Naive thymus-derived CD4-positive, alpha-beta T cell (primary cell): ENCODE measurements at regions of chr17 and their contacts with region 1.

Region 1: GRCh38 chr17:50865984-50866774 is at the start of gene TOB1:
- DNase-seq: peak; percentile 92 to 98 (median 95)
- ATAC-seq: peak; percentile 86
- H3K4me3 ChIP-seq: peak within 1 kb of the TSS; percentile 89
- H3K4me3 Mint-ChIP-seq: peak within 1 kb of the TSS; percentile 96 to 100 (median 100)
- H3K27ac ChIP-seq: peak within 1 kb of the TSS; percentile 98
- H3K27ac Mint-ChIP-seq: peak within 1 kb of the TSS; percentile 98 to 100 (median 100)
- H3K4me1 ChIP-seq: peaks cover 41 to 50% of the 10 kb centered on the region in 2 donors
- H3K4me1 Mint-ChIP-seq: peaks cover 31 to 65% (median 57%) of the 10 kb centered on the region in 7 donors
- H3K27me3 ChIP-seq: no peaks in the 10 kb centered on the region
- H3K27me3 Mint-ChIP-seq: peaks cover 0 to 2% (median 0%) of the 10 kb centered on the region in 5 donors
- total RNA-seq, gene TOB1: 51.5 to 261 (median 131) TPM

Region 2: DNA sequence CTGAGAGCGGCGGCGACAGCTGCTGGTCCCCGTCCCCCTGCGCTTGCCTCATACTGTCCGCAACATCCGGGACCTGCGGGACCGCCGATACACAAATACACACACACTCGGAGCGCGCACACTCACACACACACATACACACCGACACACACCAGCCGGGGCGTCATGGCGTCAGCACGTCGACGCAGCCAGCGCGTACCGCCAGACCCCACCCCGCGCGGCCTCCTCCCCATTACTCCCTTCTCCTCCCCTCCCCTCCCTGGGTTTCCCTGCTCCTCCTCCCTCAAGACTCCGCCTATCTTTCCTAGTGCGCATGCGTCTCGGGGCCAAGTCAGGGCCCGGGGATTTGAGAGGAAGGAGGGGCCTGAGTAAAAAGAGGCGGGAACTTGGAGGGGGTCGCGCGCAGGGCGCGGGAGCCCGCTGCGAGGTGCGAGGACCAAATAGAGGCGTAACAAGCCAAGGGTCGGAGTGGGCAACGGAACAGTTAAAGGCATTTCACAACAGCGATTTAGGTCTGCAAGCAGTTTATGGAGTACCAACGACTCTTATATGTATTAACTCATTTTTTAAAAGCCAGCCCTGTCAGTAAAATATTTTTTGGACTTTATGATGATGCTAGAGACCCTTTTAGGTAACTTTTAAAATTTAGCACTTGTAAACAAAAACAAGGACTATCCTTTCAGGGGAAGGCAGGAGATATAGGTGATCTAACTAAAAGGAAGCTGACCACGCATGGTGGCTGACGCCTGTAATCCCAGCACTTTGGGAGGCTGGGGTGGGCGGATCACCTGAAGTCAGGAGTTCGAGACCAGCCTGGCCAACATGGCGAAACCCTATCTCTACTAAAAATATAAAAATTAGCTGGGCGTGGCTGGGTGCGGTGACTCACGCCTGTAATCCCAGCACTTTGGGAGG is 1188.0 kb before region 1 on chr17 and contains the start of gene SPOP:
- CTCF ChIA-PET with region 1: no interaction called
- POLR2A ChIA-PET with region 1: no interaction called
- intact Hi-C with region 1: loop called in 1 of 2 experiments (anchors 5 kb)
- DNase-seq: peak; percentile 94 to 100 (median 99)
- ATAC-seq: peak; percentile 98
- H3K4me3 ChIP-seq: peak within 1 kb of the TSS; percentile 88
- H3K4me3 Mint-ChIP-seq: peak within 1 kb of the TSS; percentile 88 to 98 (median 94)
- H3K27ac ChIP-seq: peak within 1 kb of the TSS; percentile 87
- H3K27ac Mint-ChIP-seq: peak within 1 kb of the TSS; percentile 94 to 100 (median 98)
- H3K4me1 ChIP-seq: peaks cover 25 to 26% of the 10 kb centered on the region in 2 donors
- H3K4me1 Mint-ChIP-seq: peaks cover 36 to 65% (median 47%) of the 10 kb centered on the region in 7 donors
- H3K27me3 ChIP-seq: no peaks in the 10 kb centered on the region
- H3K27me3 Mint-ChIP-seq: peaks cover 0 to 13% (median 0%) of the 10 kb centered on the region in 5 donors
- total RNA-seq, gene SPOP: 59.6 to 94.8 (median 80.9) TPM

Region 3: DNA sequence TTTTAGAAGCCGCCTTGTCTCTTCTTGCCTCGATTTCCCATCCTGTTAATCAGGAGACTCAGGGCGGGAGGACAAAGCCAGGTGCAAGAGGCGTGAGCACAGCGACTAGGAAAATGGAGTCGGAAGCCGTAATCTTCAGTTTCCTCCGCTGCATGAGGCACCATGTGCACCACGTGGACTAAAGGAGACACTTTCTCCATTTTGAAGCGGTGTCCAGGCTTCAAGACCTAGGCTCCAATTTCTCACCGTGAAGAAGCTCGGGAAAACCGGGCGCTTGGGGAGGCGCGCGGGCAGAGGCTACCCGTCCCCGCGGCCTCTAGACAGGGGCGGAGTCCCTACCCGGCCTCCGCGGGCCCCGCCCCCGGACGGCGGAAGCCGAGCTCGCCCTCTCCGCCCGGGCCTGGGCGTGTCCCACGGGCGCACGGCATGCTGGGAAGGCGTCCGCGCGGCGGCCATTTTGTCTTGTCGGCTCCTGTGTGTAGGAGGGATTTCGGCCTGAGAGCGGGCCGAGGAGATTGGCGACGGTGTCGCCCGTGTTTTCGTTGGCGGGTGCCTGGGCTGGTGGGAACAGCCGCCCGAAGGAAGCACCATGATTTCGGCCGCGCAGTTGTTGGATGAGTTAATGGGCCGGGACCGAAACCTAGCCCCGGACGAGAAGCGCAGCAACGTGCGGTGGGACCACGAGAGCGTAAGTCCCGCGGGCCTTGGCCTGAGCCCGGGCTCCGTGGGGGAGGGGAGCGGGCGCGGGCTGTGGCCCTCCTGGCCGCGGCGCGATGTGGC is 146.8 kb before region 1 on chr17 and contains the start of gene LUC7L3:
- CTCF ChIA-PET with region 1: no interaction called
- POLR2A ChIA-PET with region 1: interaction called, 9 read pairs
- intact Hi-C with region 1: loop called in 1 of 2 experiments (anchors 1 kb)
- DNase-seq: peak; percentile 88 to 97 (median 95)
- ATAC-seq: peak; percentile 98
- H3K4me3 ChIP-seq: peak within 1 kb of the TSS; percentile 92
- H3K4me3 Mint-ChIP-seq: peak within 1 kb of the TSS; percentile 84 to 99 (median 98)
- H3K27ac ChIP-seq: peak within 1 kb of the TSS; percentile 95
- H3K27ac Mint-ChIP-seq: peak within 1 kb of the TSS; percentile 93 to 100 (median 99)
- H3K4me1 ChIP-seq: peaks cover 22 to 26% of the 10 kb centered on the region in 2 donors
- H3K4me1 Mint-ChIP-seq: peaks cover 19 to 37% (median 27%) of the 10 kb centered on the region in 7 donors
- H3K27me3 ChIP-seq: no peaks in the 10 kb centered on the region
- H3K27me3 Mint-ChIP-seq: no peaks in the 10 kb centered on the region
- total RNA-seq, gene LUC7L3: 131 to 331 (median 149) TPM

Region 4: DNA sequence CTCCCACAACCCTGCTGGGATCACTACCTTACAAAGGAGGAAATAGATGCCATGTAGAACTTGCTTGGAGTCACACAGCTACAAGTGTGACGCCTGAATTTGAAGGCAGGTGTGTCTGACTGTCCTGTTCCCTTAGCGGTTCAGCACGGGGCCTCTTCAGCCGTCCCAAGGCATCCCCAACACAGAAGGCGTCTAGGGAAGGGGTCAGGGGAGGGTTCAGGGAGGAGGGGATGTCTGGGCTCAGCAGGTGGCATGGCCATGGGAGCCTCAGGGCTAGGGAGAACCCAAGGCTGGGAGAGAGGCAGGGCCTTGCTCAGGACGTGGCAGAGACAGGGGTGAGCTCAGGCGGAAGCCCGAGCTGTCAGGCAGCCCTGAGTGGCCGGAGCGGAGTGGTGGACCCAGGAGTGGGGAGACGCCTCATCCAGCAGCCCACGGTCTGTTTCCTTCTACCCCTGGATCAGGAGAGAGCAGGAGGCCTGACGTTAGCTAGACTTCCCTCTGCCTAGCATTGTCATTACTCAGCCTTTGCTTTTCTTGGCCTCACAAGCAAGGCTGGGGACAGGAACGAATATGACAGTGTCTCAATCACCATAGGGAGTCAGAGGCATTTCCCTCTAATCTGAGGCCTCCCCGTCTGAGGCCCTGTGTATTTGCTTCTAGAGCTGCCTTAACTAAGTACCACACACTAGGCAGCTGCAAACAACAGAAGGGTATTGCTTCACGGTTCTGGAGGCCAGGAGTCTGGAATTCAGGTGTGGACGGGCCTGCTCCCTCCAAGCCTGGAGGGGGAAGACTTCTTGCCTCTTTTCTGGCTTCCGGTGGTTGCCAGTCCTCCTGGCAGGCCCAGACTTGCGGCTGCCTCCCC is 67.5 kb before region 1 on chr17:
- CTCF ChIA-PET with region 1: no interaction called
- POLR2A ChIA-PET with region 1: no interaction called
- intact Hi-C with region 1: no loop called
- DNase-seq: no peak
- ATAC-seq: no peak
- H3K4me3 ChIP-seq: no peak overlapping the region
- H3K4me3 Mint-ChIP-seq: no peak overlapping the region
- H3K27ac ChIP-seq: no peak overlapping the region
- H3K27ac Mint-ChIP-seq: no peak overlapping the region
- H3K4me1 ChIP-seq: no peaks in the 10 kb centered on the region
- H3K4me1 Mint-ChIP-seq: no peaks in the 10 kb centered on the region
- H3K27me3 ChIP-seq: no peaks in the 10 kb centered on the region
- H3K27me3 Mint-ChIP-seq: peaks cover 0 to 2% (median 0%) of the 10 kb centered on the region in 5 donors

Region 5: DNA sequence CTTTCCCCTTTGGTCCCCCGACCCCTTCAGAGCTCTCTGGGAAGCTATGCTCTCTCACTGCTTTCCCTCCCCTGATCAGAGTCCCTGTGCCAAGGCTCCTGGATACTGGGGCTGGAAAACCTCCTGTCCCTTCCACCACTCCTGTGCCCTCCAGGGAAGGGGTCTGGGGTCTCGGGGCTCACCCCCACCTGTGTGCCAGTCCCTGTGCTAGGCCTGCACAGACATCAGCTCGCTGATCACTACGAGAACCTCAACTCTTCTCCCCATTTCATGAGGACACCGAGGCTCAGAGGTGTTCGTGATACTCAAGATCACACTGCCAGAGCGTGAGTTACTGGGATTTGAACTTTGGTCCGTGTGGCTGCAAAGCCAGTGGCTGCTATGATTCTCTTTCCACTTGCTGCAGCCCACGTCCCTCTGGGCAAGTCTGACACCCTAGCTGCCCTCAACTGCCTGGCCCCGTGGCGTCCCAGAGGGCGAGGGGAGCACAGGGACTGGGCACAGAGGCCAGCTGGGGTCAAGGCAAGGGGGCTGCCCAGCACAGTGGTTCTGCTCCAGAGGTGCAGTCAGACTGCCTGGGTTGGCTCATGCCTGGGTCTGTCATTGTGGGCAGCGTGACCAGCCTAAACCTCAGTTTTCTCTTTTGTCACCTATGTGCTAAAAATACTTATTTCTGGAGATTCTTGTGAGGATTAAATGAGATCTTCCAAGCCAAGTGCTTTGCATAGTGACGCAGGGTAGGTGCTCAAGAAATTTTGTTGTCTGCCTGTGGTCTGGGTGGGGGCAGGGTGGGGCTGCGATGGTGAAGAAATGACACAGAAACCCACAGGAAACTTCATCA is 43.8 kb after region 1 on chr17:
- CTCF ChIA-PET with region 1: interaction called, 10 read pairs
- POLR2A ChIA-PET with region 1: interaction called, 828 read pairs
- intact Hi-C with region 1: loop called (anchors 1 kb)
- DNase-seq: peak in 7 of 9 donors; percentile 67 to 87 (median 81)
- ATAC-seq: peak; percentile 92
- H3K4me3 ChIP-seq: peak overlapping the region; percentile 46
- H3K4me3 Mint-ChIP-seq: peak overlapping the region; percentile 29 to 84 (median 66)
- H3K27ac ChIP-seq: peak overlapping the region; percentile 75
- H3K27ac Mint-ChIP-seq: peak overlapping the region; percentile 87 to 99 (median 98)
- H3K4me1 ChIP-seq: peaks cover 50 to 69% of the 10 kb centered on the region in 2 donors
- H3K4me1 Mint-ChIP-seq: peaks cover 41 to 78% (median 67%) of the 10 kb centered on the region in 7 donors
- H3K27me3 ChIP-seq: no peaks in the 10 kb centered on the region
- H3K27me3 Mint-ChIP-seq: peaks cover 0 to 2% (median 0%) of the 10 kb centered on the region in 5 donors

Region 6: DNA sequence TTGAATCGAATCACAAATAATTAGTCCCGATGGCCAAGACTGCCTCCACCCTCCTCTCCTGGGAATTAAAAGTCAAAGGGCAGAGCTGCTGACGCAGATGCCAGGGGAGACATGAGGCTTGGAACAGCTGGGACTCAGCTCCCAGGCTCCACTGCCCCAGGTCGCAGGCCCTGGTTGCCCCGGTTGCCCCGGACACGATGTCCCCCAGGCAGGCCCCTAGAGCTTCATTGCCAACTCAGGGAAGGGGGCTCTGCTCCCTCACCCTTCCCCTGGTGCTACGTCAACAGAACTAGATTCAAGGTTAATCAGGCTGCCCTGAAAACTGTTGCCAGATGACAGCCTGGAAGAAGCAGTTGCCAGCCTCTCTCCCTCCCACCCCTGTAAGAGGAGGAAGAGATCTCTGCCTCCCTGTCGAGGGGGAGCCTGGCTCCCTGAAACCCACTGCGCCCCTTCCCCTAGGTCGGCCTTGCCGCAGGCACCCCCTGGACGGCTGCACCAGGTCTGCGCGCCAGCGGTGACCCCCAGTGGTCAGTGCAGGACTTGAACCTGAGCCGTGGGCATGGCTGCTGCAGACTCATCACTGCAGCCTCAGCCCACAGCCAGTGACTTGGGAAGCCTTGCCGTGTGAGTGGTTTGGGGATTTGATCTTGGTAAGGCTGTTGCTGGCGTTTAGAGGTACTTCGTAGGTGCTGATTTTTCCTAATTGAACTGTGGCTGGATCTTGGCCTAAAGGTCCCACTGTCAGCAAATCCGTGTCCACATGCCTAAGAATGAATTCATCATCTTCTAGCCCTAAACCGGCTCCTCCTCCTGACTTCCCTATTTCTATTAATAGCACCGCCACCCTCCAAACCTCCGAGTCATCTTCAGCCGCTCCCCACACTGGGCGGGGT is 84.1 kb after region 1 on chr17:
- CTCF ChIA-PET with region 1: interaction called, 33 read pairs
- POLR2A ChIA-PET with region 1: interaction called, 664 read pairs
- intact Hi-C with region 1: loop called (anchors 1 to 5 kb)
- DNase-seq: peak; percentile 34 to 71 (median 51)
- ATAC-seq: peak; percentile 88
- H3K4me3 ChIP-seq: no peak overlapping the region
- H3K4me3 Mint-ChIP-seq: peak overlapping the region in 2 of 10 donors; percentile 5 to 62
- H3K27ac ChIP-seq: no peak overlapping the region
- H3K27ac Mint-ChIP-seq: peak overlapping the region in 5 of 9 donors; percentile 31 to 90 (median 69)
- H3K4me1 ChIP-seq: peaks cover 0 to 6% of the 10 kb centered on the region in 2 donors
- H3K4me1 Mint-ChIP-seq: peaks cover 14 to 39% (median 24%) of the 10 kb centered on the region in 7 donors
- H3K27me3 ChIP-seq: no peaks in the 10 kb centered on the region
- H3K27me3 Mint-ChIP-seq: no peaks in the 10 kb centered on the region

Region 7: GRCh38 chr17:51166197-51166986 is 300.2 kb after region 1 on chr17 and contains the start of gene NME2:
- CTCF ChIA-PET with region 1: no interaction called
- POLR2A ChIA-PET with region 1: interaction called, 7 read pairs
- intact Hi-C with region 1: loop called (anchors 2 to 5 kb)
- DNase-seq: peak; percentile 42 to 87 (median 50)
- ATAC-seq: peak; percentile 85
- H3K4me3 ChIP-seq: peak within 1 kb of the TSS; percentile 89
- H3K4me3 Mint-ChIP-seq: peak within 1 kb of the TSS; percentile 87 to 98 (median 95)
- H3K27ac ChIP-seq: peak within 1 kb of the TSS; percentile 80
- H3K27ac Mint-ChIP-seq: peak within 1 kb of the TSS; percentile 89 to 99 (median 95)
- H3K4me1 ChIP-seq: peaks cover 0 to 5% of the 10 kb centered on the region in 2 donors
- H3K4me1 Mint-ChIP-seq: peaks cover 0 to 36% (median 24%) of the 10 kb centered on the region in 7 donors
- H3K27me3 ChIP-seq: no peaks in the 10 kb centered on the region
- H3K27me3 Mint-ChIP-seq: no peaks in the 10 kb centered on the region
- total RNA-seq, gene NME2: 133 to 457 (median 179) TPM